ENCODE measurements at regions of chr7 and their contacts with region 1.

Region 1: DNA sequence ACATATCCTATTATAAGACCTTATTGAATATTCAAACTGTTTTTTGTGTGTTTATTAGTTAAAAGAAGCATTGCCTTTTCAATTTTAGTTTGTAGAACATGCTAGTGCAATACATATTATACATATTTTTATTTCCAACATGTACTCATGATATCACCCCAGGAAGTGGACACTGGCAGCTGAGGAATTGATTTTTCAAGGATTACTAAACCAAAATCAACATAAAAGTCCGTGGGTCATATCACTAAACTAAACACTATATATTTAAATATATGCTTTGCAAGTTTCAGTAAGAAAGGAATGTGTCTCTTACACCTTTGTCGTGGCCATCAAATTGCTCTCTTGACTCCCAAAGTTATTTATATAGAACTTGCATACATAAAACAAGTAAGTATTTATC is 185.2 kb downstream of the AGMO start:
- DNase-seq: no peak
- ATAC-seq: no peak
- H3K4me3 ChIP-seq: no peak overlapping the region
- H3K27ac ChIP-seq: no peak overlapping the region
- H3K4me1 ChIP-seq: no peaks in the 10 kb centered on the region
- H3K27me3 ChIP-seq: no peaks in the 10 kb centered on the region
- CTCF ChIP-seq: no peak
- EP300 ChIP-seq: no peak
- POLR2A ChIP-seq: no peak
- RAD21 ChIP-seq: no peak

Region 2: GRCh38 chr7:15389073-15389472 is 12.5 kb after region 1 on chr7:
- CTCF ChIA-PET with region 1: interaction called, 6 read pairs
- POLR2A ChIA-PET with region 1: no interaction called
- RAD21 ChIA-PET with region 1: no interaction called
- SMC1A ChIA-PET with region 1: interaction called, 11 read pairs
- in situ Hi-C with region 1: no loop called
- intact Hi-C with region 1: no loop called
- DNase-seq: no peak
- ATAC-seq: peak; percentile 48; the same call in 1 of the 3 replicates
- H3K4me3 ChIP-seq: no peak overlapping the region
- H3K27ac ChIP-seq: no peak overlapping the region
- H3K4me1 ChIP-seq: no peaks in the 10 kb centered on the region
- H3K27me3 ChIP-seq: no peaks in the 10 kb centered on the region
- CTCF ChIP-seq: peak in 1 of 3 experiments; percentile 5; a peak in 1 of 6 replicates
- EP300 ChIP-seq: no peak
- POLR2A ChIP-seq: no peak
- RAD21 ChIP-seq: no peak

Region 3: GRCh38 chr7:15446280-15446679 is 69.7 kb after region 1 on chr7:
- CTCF ChIA-PET with region 1: no interaction called
- POLR2A ChIA-PET with region 1: no interaction called
- RAD21 ChIA-PET with region 1: no interaction called
- SMC1A ChIA-PET with region 1: no interaction called
- in situ Hi-C with region 1: no loop called
- intact Hi-C with region 1: no loop called
- DNase-seq: no peak
- ATAC-seq: no peak
- H3K4me3 ChIP-seq: no peak overlapping the region
- H3K27ac ChIP-seq: no peak overlapping the region
- H3K4me1 ChIP-seq: no peaks in the 10 kb centered on the region
- H3K27me3 ChIP-seq: no peaks in the 10 kb centered on the region
- CTCF ChIP-seq: no peak
- EP300 ChIP-seq: no peak
- POLR2A ChIP-seq: no peak
- RAD21 ChIP-seq: no peak

Region 4: GRCh38 chr7:15780271-15780670 is 403.7 kb after region 1 on chr7:
- CTCF ChIA-PET with region 1: no interaction called
- POLR2A ChIA-PET with region 1: no interaction called
- RAD21 ChIA-PET with region 1: no interaction called
- SMC1A ChIA-PET with region 1: no interaction called
- in situ Hi-C with region 1: no loop called
- intact Hi-C with region 1: no loop called
- DNase-seq: no peak
- ATAC-seq: no peak
- H3K4me3 ChIP-seq: no peak overlapping the region
- H3K27ac ChIP-seq: no peak overlapping the region
- H3K4me1 ChIP-seq: no peaks in the 10 kb centered on the region
- H3K27me3 ChIP-seq: no peaks in the 10 kb centered on the region
- CTCF ChIP-seq: no peak
- EP300 ChIP-seq: no peak
- POLR2A ChIP-seq: no peak
- RAD21 ChIP-seq: no peak

Measured in GM12878 (cell line).